ENCODE measurements at regions of chr1 and their contacts with region 1.

Region 1: DNA sequence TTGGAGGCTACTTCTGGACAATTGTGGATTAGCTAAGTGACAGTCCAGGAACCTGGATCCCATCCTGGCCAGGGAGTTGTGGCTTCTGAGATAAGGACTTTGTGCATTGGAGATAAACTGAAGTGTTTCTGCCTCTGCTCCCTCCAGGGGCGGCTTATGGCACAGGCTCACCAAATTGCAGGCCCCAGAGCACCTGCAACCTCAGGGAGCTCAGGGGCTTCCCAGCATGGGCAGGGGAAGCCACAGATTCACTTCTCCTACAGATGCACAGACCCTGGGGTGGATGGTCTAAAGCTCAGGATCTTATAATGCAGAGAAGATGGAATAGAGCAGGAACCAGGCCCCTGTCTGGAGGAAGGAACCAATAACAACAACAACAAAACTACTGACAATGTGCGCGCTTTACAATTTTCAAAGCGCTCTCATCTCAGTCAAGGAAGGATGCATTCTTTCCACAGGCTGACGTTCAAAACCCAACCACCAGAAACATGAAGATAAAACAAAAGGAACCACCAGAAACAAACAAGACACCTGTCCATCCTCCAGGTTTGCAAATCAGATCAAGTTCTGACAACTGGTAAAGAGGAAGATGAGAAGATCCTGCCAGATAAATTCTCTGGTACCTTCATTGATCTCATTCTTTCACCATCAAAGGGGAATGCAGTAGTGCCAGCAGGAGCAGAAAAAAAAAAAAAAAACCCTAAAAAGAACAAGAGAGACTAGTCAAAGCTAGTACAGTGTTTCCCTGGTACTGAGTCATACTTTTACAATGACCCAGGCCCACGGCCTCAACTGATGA is 121.0 kb upstream of the IRF2BP2 start:
- DNase-seq: peak; percentile 26
- ATAC-seq: no peak

Region 2: DNA sequence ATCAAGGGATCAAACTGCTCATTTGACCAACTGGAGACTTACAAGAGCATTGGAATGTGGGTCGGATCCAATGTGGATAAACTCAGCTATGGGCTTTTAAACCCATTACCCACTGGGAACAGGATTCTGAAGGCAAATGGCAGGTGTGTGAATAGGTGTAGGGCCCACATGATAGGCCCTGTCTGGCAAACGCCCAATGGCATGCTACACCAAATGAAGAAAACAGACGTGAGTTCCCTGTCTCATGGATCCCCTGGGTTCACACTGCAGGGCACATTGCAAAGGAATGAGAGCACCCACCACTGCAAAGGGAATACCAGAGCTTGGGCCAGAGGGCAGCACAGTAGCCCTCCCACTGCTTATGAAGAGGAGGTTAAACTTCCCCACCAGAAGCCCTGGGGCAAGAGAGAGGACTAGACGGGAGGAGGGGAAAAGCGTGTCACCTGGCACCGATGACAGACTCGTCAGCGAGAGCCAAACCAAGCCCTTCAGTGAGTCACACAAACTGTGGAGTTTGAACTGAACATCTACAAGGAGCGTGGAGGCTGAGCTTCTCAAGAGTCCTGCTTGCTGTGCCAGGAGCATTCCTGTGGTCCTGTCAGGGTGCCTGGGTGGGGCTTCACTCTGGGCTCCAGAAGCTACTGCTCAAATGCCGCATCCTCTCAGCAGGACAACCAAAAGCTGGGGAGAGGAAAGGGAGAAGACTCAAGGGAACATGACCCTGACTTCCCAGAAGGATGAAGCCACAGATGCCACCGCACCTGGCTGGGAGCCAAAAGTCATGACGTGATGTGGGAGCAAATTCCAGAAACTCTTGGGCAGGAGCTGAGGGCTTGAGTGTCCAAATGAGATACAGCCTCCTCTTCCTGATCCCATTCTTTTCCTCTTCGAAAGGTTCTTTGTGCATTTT is 336.5 kb after region 1 on chr1:
- intact Hi-C with region 1: loop called (anchors 10 kb)
- DNase-seq: peak; percentile 87
- ATAC-seq: peak; percentile 87

Measured in sciatic nerve (tissue), 2 donors.